Gastrocnemius medialis (tissue), 4 donors: ENCODE measurements at regions of chr11 and their contacts with region 1.

Region 1: GRCh38 chr11:126480410-126481302 is 125.2 kb downstream of the ST3GAL4 start:
- DNase-seq: peak; percentile 59 to 72
- ATAC-seq: peak; percentile 81 to 92
- H3K4me3 ChIP-seq: peak overlapping the region; percentile 33 to 50 (median 40)
- H3K27ac ChIP-seq: peak overlapping the region; percentile 30 to 63 (median 46)
- H3K4me1 ChIP-seq: peaks cover 0 to 5% of the 10 kb centered on the region in 2 donors
- H3K27me3 ChIP-seq: no peaks in the 10 kb centered on the region
- CTCF ChIP-seq: peak; percentile 87 to 96 (median 89)
- POLR2A ChIP-seq: no peak

Region 2: DNA sequence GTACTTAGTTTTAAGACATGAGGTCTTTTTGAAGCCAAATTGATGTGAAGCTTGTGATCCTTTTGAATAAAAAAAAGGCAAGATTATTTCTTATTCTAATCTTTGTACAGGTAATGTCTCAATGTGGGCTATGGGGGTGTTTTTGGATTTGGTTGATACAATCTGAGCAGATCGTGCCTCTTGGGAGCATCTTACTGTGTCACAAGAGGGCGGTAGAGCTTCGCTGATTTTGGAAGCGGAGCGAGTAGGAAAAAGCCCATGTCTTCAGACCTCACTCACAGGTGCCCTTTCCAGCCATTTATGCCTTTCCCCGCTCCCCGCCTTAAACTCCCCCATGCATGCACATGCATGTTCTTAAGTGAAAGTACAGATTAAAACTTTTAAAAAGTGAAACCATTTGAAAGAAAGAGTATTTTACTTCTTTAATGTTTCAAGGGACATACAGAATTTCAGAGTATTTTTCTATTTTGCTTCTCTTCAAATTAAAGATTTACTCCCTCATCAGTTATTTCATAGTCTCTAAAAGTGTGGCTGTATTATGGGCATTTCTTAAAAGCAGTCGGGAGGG is 557.6 kb before region 1 on chr11:
- in situ Hi-C with region 1: no loop called
- intact Hi-C with region 1: loop called (anchors 5 kb)
- DNase-seq: peak in 1 of 2 donors; percentile 44
- ATAC-seq: peak; percentile 91 to 93
- H3K4me3 ChIP-seq: no peak overlapping the region
- H3K27ac ChIP-seq: no peak overlapping the region
- H3K4me1 ChIP-seq: no peaks in the 10 kb centered on the region
- H3K27me3 ChIP-seq: peaks cover 0 to 3% (median 0%) of the 10 kb centered on the region in 3 donors
- CTCF ChIP-seq: peak; percentile 38 to 74 (median 64)
- POLR2A ChIP-seq: no peak

Region 3: DNA sequence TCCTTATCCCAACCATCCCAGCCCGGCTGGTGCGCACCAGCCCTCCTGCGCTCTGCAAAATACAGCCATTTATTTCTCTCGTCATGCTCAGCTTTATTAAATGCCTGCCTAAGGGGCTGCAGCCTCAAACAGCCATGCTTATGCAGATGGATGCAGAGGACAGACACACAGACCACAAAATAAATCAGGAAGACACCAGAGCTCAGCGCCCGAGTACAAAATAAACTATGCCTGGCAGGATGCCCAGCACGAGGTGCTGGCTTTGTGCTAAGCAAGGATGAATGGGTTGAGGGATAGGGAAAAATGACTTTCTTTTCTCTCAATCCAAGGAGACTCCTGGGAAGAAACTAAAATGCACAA is 339.7 kb before region 1 on chr11:
- in situ Hi-C with region 1: loop called in 1 of 4 experiments (anchors 25 kb)
- intact Hi-C with region 1: no loop called
- DNase-seq: no peak
- ATAC-seq: no peak
- H3K4me3 ChIP-seq: no peak overlapping the region
- H3K27ac ChIP-seq: no peak overlapping the region
- H3K4me1 ChIP-seq: peaks cover 0 to 7% of the 10 kb centered on the region in 2 donors
- H3K27me3 ChIP-seq: peaks cover 10 to 11% (median 10%) of the 10 kb centered on the region in 3 donors
- CTCF ChIP-seq: no peak
- POLR2A ChIP-seq: no peak

Region 4: GRCh38 chr11:126303623-126304456 is 176.8 kb before region 1 on chr11 and contains the start of gene DCPS:
- in situ Hi-C with region 1: loop called in 1 of 4 experiments (anchors 25 kb)
- intact Hi-C with region 1: no loop called
- DNase-seq: peak; percentile 77 to 89
- ATAC-seq: peak; percentile 88 to 95
- H3K4me3 ChIP-seq: peak within 1 kb of the TSS; percentile 61 to 89 (median 76)
- H3K27ac ChIP-seq: peak within 1 kb of the TSS; percentile 85 to 96 (median 90)
- H3K4me1 ChIP-seq: peaks cover 14 to 34% of the 10 kb centered on the region in 2 donors
- H3K27me3 ChIP-seq: no peaks in the 10 kb centered on the region
- CTCF ChIP-seq: no peak
- POLR2A ChIP-seq: peak; percentile 23 to 31
- total RNA-seq, gene DCPS: 9.8 to 23.1 (median 11.5) TPM

Region 5: GRCh38 chr11:126310228-126310991 is 170.2 kb before region 1 on chr11:
- in situ Hi-C with region 1: loop called (anchors 10 to 25 kb)
- intact Hi-C with region 1: loop called (anchors 1 kb)
- DNase-seq: peak; percentile 53 to 69
- ATAC-seq: peak; percentile 73 to 75
- H3K4me3 ChIP-seq: no peak overlapping the region
- H3K27ac ChIP-seq: peak overlapping the region in 3 of 4 donors; percentile 23 to 79 (median 43)
- H3K4me1 ChIP-seq: peaks cover 16 to 29% of the 10 kb centered on the region in 2 donors
- H3K27me3 ChIP-seq: no peaks in the 10 kb centered on the region
- CTCF ChIP-seq: peak; percentile 67 to 89 (median 80)
- POLR2A ChIP-seq: no peak

Region 6: DNA sequence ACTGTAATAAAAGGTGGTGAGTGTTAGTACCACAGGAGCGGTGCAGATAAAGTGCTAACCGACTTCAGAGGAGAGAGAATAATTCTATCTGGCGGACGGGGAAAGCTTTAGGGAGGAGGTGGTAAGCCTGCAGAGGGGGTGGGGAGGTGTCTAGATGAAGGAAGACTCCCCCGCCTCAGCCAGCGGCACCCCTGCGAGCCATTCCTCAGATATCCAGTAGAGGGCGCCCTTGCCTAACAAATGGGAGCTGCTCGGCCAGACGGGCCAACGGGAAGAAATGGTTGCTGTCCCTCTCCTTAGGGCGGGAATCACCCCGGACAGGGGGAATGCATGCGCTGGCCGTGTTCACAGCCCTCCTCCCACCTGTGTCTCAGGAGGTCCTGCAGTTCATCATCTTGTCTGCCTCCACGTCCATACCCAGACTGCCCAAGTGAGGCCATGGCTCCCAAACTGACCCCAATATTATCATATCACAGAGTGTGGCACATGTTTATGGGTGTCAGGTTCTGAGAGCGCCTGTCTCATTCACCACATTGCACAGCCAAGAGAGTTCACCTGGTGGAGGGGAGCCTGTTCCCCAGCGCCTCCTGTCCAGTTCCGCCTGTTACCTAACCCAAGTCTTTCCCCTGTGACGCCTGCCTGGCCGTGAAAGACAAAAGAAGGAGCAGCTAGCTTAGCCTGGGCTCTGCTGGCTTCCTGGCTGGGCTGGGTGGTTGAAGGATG is 39.7 kb before region 1 on chr11:
- in situ Hi-C with region 1: no loop called
- intact Hi-C with region 1: loop called (anchors 1 kb)
- DNase-seq: peak; percentile 46 to 50
- ATAC-seq: peak; percentile 55 to 85
- H3K4me3 ChIP-seq: no peak overlapping the region
- H3K27ac ChIP-seq: no peak overlapping the region
- H3K4me1 ChIP-seq: no peaks in the 10 kb centered on the region
- H3K27me3 ChIP-seq: peaks cover 0 to 3% (median 0%) of the 10 kb centered on the region in 3 donors
- CTCF ChIP-seq: peak; percentile 91 to 96 (median 93)
- POLR2A ChIP-seq: no peak

Region 7: GRCh38 chr11:126465573-126466188 is 15.0 kb before region 1 on chr11:
- in situ Hi-C with region 1: no loop called
- intact Hi-C with region 1: no loop called
- DNase-seq: no peak
- ATAC-seq: no peak
- H3K4me3 ChIP-seq: no peak overlapping the region
- H3K27ac ChIP-seq: no peak overlapping the region
- H3K4me1 ChIP-seq: no peaks in the 10 kb centered on the region
- H3K27me3 ChIP-seq: no peaks in the 10 kb centered on the region
- CTCF ChIP-seq: no peak
- POLR2A ChIP-seq: no peak